ENCODE measurements at regions of chr6 and their contacts with region 1.

Region 1: DNA sequence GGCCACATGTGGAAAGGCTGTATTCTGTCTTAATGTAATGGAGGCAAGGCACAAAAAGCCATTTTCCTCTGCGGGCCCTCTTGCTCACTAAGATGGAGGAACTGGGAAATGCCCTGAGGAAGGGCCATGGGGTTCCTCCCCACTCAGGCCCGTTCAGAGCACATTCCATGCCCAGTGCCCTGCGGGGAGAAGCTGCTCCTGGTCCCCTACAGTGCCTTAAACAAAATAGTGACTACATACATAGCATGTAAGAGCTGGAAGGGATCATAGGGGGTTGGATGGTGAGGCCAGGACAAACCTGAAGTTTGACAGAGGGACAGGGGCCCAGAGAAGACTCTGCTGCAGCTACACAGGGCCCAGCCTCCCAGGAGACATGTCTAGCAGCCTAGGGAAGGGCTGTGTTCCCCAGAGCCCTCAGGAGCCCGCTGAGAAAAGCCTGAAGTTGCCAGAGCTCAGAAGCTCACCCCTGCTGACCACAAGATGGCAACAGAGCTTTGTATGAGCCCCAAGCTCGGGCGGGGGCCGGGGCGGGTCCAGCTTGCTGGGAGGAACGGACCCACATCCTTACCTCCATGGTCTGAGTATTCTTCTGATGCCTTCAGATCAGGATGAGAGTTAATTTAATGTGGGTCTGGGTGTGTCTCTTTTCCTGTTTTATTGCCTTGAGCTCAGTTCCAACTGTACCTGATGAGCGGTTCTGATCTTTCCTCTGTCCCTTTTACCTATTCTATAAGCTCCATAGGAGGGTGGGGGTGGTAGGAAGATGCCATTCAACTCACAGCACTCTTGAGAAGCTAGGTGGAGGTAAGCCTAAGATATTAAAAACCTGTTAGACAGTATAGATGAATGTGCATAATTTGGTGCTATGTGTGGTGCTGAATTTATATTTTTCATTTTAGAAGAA is 242.9 kb downstream of the CDC5L start:
- H3K4me3 ChIP-seq: no peak overlapping the region
- H3K27ac ChIP-seq: no peak overlapping the region
- H3K4me1 ChIP-seq: no peaks in the 10 kb centered on the region
- CTCF ChIP-seq: peak; percentile 54; the same call in 1 of the 2 replicates

Region 2: GRCh38 chr6:44593539-44593944 is 36.8 kb before region 1 on chr6:
- CTCF ChIA-PET with region 1: interaction called, 11 read pairs
- POLR2A ChIA-PET with region 1: no interaction called
- H3K4me3 ChIP-seq: no peak overlapping the region
- H3K27ac ChIP-seq: no peak overlapping the region
- H3K4me1 ChIP-seq: no peaks in the 10 kb centered on the region
- CTCF ChIP-seq: peak; percentile 41; the same call in 1 of the 2 replicates

Region 3: GRCh38 chr6:44618371-44618770 is 12.0 kb before region 1 on chr6:
- CTCF ChIA-PET with region 1: interaction called, 10 read pairs
- POLR2A ChIA-PET with region 1: no interaction called
- H3K4me3 ChIP-seq: no peak overlapping the region
- H3K27ac ChIP-seq: no peak overlapping the region
- H3K4me1 ChIP-seq: no peaks in the 10 kb centered on the region
- CTCF ChIP-seq: no peak

Region 4: GRCh38 chr6:44642870-44643529 is 12.6 kb after region 1 on chr6:
- CTCF ChIA-PET with region 1: interaction called, 16 read pairs
- POLR2A ChIA-PET with region 1: no interaction called
- H3K4me3 ChIP-seq: no peak overlapping the region
- H3K27ac ChIP-seq: no peak overlapping the region
- H3K4me1 ChIP-seq: no peaks in the 10 kb centered on the region
- CTCF ChIP-seq: no peak

Region 5: DNA sequence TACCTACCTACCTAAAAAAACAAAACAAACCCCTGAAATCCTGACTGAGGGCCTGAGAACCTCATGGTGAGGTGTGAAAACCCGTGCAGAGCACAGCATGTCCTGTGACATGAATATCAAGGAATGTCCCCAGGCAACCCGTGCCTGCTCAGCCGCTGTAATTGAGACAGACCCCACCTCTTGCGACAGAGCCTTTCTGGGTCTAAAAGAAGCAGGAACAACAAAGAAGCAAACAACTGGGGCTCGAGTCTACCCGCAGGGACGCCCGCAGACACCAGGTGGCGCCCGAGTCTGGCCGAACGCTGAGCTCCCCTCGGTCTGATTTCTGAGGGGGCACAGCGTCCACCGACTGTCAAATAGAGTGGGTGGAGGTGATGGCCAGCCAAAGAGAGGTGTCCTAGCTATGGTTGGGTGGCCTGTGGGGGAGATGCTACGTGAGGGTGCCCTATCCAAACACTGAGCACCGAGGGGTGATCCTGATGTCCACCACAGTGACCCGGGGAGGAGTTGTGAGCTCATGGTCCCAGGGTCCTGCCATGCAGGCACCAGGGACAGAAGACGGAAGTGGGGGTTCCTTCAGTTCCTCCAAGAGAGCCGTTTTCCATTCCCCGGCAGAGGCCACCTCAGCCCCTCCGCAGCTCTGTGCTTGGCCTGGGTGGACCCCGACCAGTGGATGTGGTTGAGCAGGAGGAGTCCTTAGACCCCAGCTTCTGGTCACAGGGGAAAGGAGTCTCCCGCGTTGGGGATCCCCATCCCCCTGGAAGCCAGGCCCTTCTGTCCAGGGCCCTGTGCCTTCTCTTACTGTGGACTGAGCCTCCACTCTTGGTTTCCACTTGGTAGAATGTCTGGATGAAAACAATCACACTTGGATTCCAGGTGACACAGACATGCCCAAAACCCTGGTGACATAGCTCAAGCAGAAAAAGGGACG is 25.3 kb after region 1 on chr6:
- CTCF ChIA-PET with region 1: interaction called, 32 read pairs
- POLR2A ChIA-PET with region 1: no interaction called
- H3K4me3 ChIP-seq: no peak overlapping the region
- H3K27ac ChIP-seq: no peak overlapping the region; the same call in 1 of the 2 replicates
- H3K4me1 ChIP-seq: peaks cover 12% of the 10 kb centered on the region
- CTCF ChIP-seq: peak; percentile 88

Region 6: GRCh38 chr6:44867571-44868334 is 237.4 kb after region 1 on chr6:
- CTCF ChIA-PET with region 1: no interaction called
- POLR2A ChIA-PET with region 1: no interaction called
- H3K4me3 ChIP-seq: no peak overlapping the region
- H3K27ac ChIP-seq: no peak overlapping the region
- H3K4me1 ChIP-seq: no peaks in the 10 kb centered on the region
- CTCF ChIP-seq: no peak

Region 7: GRCh38 chr6:44966449-44967092 is 336.2 kb after region 1 on chr6:
- CTCF ChIA-PET with region 1: no interaction called
- POLR2A ChIA-PET with region 1: no interaction called
- H3K4me3 ChIP-seq: no peak overlapping the region
- H3K27ac ChIP-seq: no peak overlapping the region
- H3K4me1 ChIP-seq: peaks cover 4% of the 10 kb centered on the region; the same call in 1 of the 2 replicates
- CTCF ChIP-seq: no peak

Measured in HEK293 (cell line).